ENCODE measurements at regions of chr17 and their contacts with region 1.

Region 1: GRCh38 chr17:76307299-76307965 is 644 bp downstream of the QRICH2 start:
- DNase-seq: peak in 1 of 2 donors; percentile 75
- ATAC-seq: peak; percentile 16
- H3K4me3 ChIP-seq: no peak overlapping the region
- H3K27ac ChIP-seq: no peak overlapping the region
- H3K4me1 ChIP-seq: no peaks in the 10 kb centered on the region
- H3K27me3 ChIP-seq: no peaks in the 10 kb centered on the region

Region 2: GRCh38 chr17:76353599-76354316 is 46.3 kb after region 1 on chr17 and contains the start of gene PRPSAP1:
- intact Hi-C with region 1: loop called in 1 of 2 experiments (anchors 10 kb)
- DNase-seq: peak; percentile 92 to 94
- ATAC-seq: peak; percentile 98
- H3K4me3 ChIP-seq: peak within 1 kb of the TSS; percentile 59 to 80
- H3K27ac ChIP-seq: peak within 1 kb of the TSS in 1 of 2 donors; percentile 41
- H3K4me1 ChIP-seq: no peaks in the 10 kb centered on the region
- H3K27me3 ChIP-seq: peaks cover 0 to 2% of the 10 kb centered on the region in 2 donors
- total RNA-seq, gene PRPSAP1: 47.2 to 64.4 TPM

Region 3: DNA sequence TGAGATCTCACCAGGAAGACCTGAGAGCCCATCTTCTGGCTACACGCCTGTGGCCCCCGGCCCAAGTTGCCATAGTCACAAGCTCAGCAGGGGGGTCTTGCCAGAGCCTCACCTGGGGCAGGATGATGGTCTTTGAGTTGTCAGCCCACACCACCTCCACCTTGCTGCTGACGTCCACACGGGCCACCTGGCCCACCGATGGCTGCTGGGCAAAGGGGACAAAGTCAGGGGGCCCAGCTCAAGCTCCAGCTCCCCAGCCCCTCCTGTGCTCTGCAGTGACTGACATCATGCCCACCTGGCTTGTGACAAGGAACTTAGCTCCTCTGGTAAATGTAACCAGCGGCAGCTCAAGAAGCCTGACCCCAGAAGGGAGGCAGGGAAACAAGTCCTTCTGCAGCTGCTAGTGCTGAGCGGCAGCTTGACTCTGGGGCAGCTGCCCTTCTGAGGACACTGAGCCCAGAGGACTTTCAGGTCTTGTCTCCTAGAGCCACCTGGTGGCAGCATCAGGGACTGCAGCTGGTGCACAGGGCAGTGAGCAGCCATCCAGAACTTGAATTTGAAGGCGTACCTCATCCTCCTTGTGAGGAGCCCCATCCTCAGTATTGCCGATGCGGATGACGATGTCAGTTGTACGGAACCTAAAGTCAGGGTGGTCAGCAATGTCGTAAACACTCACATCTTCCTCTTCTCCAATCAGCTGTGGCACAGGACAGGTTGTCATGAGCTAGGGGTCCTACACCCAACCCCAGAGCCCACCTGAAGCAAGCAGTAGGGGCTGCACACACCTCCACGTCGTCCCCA is 90.5 kb after region 1 on chr17:
- intact Hi-C with region 1: loop called (anchors 2 kb)
- DNase-seq: peak; percentile 93 to 97
- ATAC-seq: peak; percentile 84
- H3K4me3 ChIP-seq: no peak overlapping the region
- H3K27ac ChIP-seq: no peak overlapping the region
- H3K4me1 ChIP-seq: no peaks in the 10 kb centered on the region
- H3K27me3 ChIP-seq: no peaks in the 10 kb centered on the region

Region 4: GRCh38 chr17:76501018-76501826 is 193.8 kb after region 1 on chr17 and contains the start of gene RHBDF2:
- intact Hi-C with region 1: loop called in 1 of 2 experiments (anchors 10 kb)
- DNase-seq: peak; percentile 94 to 96
- ATAC-seq: peak; percentile 91
- H3K4me3 ChIP-seq: peak within 1 kb of the TSS in 1 of 2 donors; percentile 29
- H3K27ac ChIP-seq: peak within 1 kb of the TSS in 1 of 2 donors; percentile 7
- H3K4me1 ChIP-seq: peaks cover 0 to 1% of the 10 kb centered on the region in 2 donors
- H3K27me3 ChIP-seq: no peaks in the 10 kb centered on the region
- total RNA-seq, gene RHBDF2: 30.9 to 45.0 TPM